ENCODE measurements at regions of chrX and their contacts with region 1.

Region 1: GRCh38 chrX:101415180-101416145 is 7.4 kb downstream of the HNRNPH2 start:
- DNase-seq: no peak
- ATAC-seq: peak; percentile 60
- H3K4me3 Mint-ChIP-seq: peak overlapping the region; percentile 52
- H3K27ac Mint-ChIP-seq: peak overlapping the region; percentile 80
- H3K4me1 Mint-ChIP-seq: peaks cover 60% of the 10 kb centered on the region
- H3K27me3 Mint-ChIP-seq: no peaks in the 10 kb centered on the region
- CTCF ChIP-seq: no peak

Region 2: DNA sequence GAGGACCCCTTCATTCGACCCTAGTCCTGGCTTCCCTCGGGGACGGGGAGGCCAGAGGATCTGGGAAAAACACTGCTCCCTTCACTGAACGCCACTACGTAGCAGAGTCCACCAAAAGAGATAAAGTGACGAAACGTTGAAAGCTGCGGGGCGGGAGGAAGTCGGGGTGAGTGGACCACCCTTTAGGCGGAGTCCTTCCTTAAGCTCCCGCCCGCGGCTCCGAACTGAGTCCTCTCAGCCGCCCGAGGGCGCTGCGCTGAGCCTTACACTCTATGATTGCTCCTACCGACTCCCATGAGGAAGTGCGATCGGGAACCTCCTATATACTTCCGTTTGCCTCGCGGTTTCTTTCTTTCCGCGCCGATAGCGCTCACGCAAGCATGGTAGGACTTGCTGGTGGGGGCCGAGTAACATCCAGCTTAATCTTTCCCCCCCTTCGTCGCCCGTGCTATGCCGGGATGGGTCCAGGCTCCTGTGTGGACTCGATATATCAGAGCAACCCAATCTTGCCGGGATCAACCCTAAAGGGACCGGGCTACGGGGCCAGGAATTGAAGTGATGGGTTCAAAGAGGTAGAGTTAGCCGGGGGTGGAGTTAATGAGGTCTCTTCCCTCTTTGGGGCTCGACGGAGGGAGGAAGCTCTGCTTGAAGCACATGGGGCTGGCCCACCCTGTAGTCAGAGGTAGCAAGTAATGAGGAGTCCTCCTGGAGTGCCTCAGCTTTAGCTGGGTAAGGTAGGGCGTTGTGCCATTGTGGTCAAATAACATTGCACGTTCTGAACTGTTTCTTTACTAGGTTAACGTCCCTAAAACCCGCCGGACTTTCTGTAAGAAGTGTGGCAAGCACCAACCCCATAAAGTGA is 24.6 kb before region 1 on chrX and contains the start of gene RPL36A:
- CTCF ChIA-PET with region 1: interaction called, 3 read pairs
- POLR2A ChIA-PET with region 1: interaction called, 23 read pairs
- intact Hi-C with region 1: no loop called
- DNase-seq: peak; percentile 61
- ATAC-seq: peak; percentile 76
- H3K4me3 Mint-ChIP-seq: peak within 1 kb of the TSS; percentile 95
- H3K27ac Mint-ChIP-seq: peak within 1 kb of the TSS; percentile 94
- H3K4me1 Mint-ChIP-seq: peaks cover 47% of the 10 kb centered on the region
- H3K27me3 Mint-ChIP-seq: no peaks in the 10 kb centered on the region
- CTCF ChIP-seq: no peak
- total RNA-seq, gene RPL36A: 234 and 287 TPM in 2 replicates

Region 3: GRCh38 chrX:101539116-101539515 is 123.7 kb after region 1 on chrX:
- CTCF ChIA-PET with region 1: no interaction called
- POLR2A ChIA-PET with region 1: no interaction called
- intact Hi-C with region 1: no loop called
- DNase-seq: no peak
- ATAC-seq: no peak
- H3K4me3 Mint-ChIP-seq: no peak overlapping the region
- H3K27ac Mint-ChIP-seq: no peak overlapping the region
- H3K4me1 Mint-ChIP-seq: no peaks in the 10 kb centered on the region
- H3K27me3 Mint-ChIP-seq: no peaks in the 10 kb centered on the region
- CTCF ChIP-seq: no peak

Region 4: DNA sequence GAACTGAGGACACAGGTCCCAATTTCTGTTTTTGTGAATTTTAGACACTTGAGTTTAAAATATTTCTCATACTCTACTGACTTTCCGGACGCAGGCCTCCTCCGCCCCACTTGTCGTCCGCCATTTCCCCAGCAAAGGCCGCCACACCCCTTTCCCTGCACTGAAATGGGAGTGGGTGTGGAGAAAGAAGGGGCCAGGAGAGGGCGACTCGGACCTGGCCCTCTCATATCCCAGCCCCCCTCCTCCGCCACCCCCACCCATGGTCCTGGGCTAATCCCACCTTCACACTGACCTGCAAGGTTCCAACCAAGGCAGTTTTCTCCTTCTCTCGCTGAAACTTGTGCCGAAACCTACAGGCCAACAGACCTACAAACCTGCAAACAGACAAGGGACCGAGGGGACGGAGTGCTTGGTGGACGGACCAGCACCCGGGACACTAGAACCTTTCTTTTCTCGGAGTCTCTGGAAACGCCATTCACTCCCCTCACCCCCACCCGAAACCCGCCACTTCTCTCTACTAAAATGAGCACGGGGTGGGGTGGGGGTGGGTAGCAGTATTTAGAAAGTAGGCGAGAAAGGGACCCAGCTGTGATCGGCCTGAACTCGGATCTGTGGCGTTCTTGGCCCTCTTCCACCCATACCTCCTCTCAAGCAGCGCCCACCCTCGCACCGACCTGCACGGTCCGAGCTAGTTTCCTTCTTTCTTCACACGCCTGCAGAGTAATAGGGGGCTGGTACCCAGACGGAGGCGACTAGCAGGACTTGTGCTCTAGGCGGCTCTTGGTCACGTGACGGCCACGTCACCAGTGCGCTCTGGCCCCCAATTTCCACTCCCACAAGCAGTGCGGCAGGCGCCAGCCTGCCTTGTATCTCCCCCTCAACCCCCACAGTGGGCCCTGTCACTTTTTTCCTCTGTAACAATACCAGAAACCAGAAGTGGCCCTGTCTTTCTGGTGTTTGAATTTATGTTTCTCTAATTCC is 202.0 kb after region 1 on chrX and contains the start of gene ARMCX6:
- CTCF ChIA-PET with region 1: no interaction called
- POLR2A ChIA-PET with region 1: interaction called, 3 read pairs
- intact Hi-C with region 1: loop called (anchors 5 kb)
- DNase-seq: peak; percentile 60
- ATAC-seq: peak; percentile 86
- H3K4me3 Mint-ChIP-seq: peak within 1 kb of the TSS; percentile 91
- H3K27ac Mint-ChIP-seq: peak within 1 kb of the TSS; percentile 91
- H3K4me1 Mint-ChIP-seq: peaks cover 4% of the 10 kb centered on the region
- H3K27me3 Mint-ChIP-seq: no peaks in the 10 kb centered on the region
- CTCF ChIP-seq: no peak
- total RNA-seq, gene ARMCX6: 45.1 and 50.5 TPM in 2 replicates

Region 5: DNA sequence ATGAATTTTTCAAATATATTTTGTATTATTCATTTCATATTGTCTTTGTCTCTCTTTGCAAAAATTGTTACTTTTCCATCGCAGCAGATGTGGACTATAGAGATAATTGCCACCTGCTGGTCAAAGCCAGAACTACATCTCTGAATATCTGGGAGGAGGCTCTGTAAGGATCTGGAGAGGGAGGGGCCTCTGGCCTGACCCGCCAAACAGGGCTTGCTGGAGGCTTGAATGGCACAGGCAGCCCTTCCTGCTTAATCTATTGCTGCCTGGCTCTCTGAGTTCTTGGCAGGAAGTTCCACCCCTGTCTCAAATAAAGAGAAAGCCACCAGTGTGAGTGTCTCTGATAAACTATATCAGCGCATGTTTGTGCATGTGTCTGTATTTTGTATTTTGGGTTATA is 383.9 kb after region 1 on chrX:
- CTCF ChIA-PET with region 1: no interaction called
- POLR2A ChIA-PET with region 1: no interaction called
- intact Hi-C with region 1: loop called (anchors 1 kb)
- DNase-seq: peak; percentile 21
- ATAC-seq: peak; percentile 100
- H3K4me3 Mint-ChIP-seq: peak overlapping the region; percentile 50
- H3K27ac Mint-ChIP-seq: no peak overlapping the region
- H3K4me1 Mint-ChIP-seq: no peaks in the 10 kb centered on the region
- H3K27me3 Mint-ChIP-seq: peaks cover 1% of the 10 kb centered on the region
- CTCF ChIP-seq: peak; percentile 27

Region 6: DNA sequence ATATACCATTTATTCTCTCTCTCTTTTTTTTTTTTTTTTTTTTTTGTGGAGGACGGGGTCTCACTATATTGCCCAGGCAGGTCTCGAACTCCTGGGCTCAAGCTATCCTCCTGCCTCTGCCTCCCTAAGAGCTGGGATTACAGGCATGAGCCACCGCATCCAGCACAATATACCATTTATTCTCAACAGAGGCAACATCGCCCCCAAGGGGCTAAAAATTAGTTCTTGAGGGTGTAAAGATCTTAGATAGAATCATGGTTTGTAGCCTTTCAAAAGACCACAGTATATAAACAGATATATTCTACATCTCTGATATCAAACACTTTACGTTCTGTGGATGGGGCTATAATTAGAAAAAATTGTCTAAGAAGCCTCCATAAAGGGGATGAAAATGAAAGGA is 670.2 kb after region 1 on chrX:
- CTCF ChIA-PET with region 1: no interaction called
- POLR2A ChIA-PET with region 1: no interaction called
- intact Hi-C with region 1: loop called (anchors 5 kb)
- DNase-seq: no peak
- ATAC-seq: no peak
- H3K4me3 Mint-ChIP-seq: no peak overlapping the region
- H3K27ac Mint-ChIP-seq: no peak overlapping the region
- H3K4me1 Mint-ChIP-seq: no peaks in the 10 kb centered on the region
- H3K27me3 Mint-ChIP-seq: no peaks in the 10 kb centered on the region
- CTCF ChIP-seq: no peak

Measured in activated B cell treated with CpG ODN at 0.5 μM for 24 hours (primary cell).